ENCODE measurements at regions of chr6 and their contacts with region 1.

Region 1: DNA sequence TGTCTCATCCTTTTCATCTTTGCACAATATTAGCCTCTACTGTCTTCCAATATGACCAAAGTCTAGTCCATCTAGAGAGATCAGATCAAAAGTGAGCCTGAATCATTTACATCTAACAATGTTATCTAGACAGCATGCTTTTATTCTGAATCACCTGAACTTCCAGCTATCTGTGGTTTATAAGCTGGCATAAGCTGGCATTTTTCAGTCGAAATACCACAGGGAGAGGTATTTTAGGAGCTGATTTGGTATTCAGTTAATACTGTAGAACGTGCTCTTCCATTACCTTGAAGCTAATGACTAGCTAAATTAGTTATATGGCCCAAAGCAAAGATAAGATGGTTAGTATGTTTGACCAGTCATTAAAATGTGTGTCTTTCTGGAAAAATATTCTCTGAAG is 188.3 kb upstream of the AGPAT4 start:
- DNase-seq: no peak
- H3K4me3 Mint-ChIP-seq: no peak overlapping the region
- H3K27ac Mint-ChIP-seq: no peak overlapping the region
- H3K4me1 Mint-ChIP-seq: peaks cover 13% of the 10 kb centered on the region
- H3K27me3 Mint-ChIP-seq: no peaks in the 10 kb centered on the region
- CTCF ChIP-seq: no peak

Region 2: DNA sequence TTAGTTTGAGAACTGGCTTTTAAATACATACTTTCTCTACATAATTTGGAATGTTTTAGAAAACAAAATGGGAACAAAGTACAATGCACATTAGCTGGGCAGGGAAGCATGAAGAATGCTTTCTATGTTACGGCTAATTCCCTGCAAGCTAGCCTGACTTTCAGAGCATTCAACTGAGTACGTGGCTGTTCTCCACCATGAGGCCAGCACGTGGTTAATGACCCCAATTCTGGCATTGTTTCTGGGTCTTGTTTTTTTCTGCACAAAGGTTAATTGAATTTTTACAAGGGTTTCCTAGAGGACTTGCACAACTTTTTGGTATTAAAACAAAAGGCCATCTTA is 20.3 kb after region 1 on chr6:
- CTCF ChIA-PET with region 1: interaction called, 5 read pairs
- intact Hi-C with region 1: loop called (anchors 2 kb)
- DNase-seq: no peak
- H3K4me3 Mint-ChIP-seq: no peak overlapping the region
- H3K27ac Mint-ChIP-seq: no peak overlapping the region
- H3K4me1 Mint-ChIP-seq: peaks cover 19% of the 10 kb centered on the region
- H3K27me3 Mint-ChIP-seq: no peaks in the 10 kb centered on the region
- CTCF ChIP-seq: no peak

Measured in Calu3 (cell line).